Activated T-helper 1 cell treated with anti-CD3 and anti-CD28 coated beads, Interleukin-12 subunit alpha, Interleukin-12 subunit beta, Interleukin-2, Interleukin-4 antibody, amounts not matched to agents 30 ng/mL and 10 ng/mL and 1 ng/mL, durations not matched to agents 14 hours and 24 hours and 36 hours (primary cell): ENCODE measurements at regions of chr15 and their contacts with region 1.

Region 1: DNA sequence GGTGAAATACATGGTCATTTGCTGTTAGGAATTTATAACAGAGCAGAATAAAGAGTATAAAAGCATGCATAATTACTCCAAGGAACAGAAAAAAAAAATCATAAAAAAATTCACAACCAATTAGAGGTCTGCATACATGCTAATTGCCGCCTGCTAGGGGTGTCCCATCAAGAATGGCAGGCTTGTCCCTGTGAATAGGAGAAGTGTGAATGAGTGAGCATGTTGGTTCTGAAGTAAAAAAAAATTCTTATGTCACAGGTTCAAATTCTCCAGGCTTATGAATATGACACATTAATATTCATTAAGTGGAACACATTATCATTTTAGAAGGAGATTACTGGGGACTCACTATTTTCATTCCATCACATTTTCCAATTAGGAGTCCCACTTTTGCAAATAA is 822.7 kb downstream of the NTRK3 start:
- DNase-seq: no peak
- H3K4me3 Mint-ChIP-seq: no peak overlapping the region
- H3K27ac Mint-ChIP-seq: no peak overlapping the region
- H3K4me1 Mint-ChIP-seq: no peaks in the 10 kb centered on the region
- H3K27me3 Mint-ChIP-seq: no peaks in the 10 kb centered on the region

Region 2: DNA sequence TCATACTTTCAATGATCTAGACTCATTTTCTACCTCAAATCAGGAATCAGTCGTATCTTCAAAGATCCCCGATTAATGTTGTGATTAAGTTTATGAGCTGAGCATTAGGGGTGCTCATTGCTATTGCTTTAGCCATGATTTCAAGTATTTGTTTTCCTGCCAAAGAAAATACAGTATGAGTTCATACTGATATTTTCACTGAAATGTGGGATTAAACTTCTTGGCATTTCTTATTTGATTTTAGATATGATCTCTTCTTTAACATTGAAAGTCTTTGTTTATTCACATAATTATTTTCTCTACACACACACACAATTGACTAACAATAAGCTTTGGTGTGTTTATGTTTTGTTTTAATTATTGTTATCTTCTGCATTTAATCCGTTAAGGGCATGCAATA is 37.1 kb after region 1 on chr15:
- intact Hi-C with region 1: loop called (anchors 1 kb)
- DNase-seq: no peak
- H3K4me3 Mint-ChIP-seq: no peak overlapping the region
- H3K27ac Mint-ChIP-seq: no peak overlapping the region
- H3K4me1 Mint-ChIP-seq: no peaks in the 10 kb centered on the region
- H3K27me3 Mint-ChIP-seq: no peaks in the 10 kb centered on the region